ENCODE measurements at regions of chr21 and their contacts with region 1.

Region 1: GRCh38 chr21:36319765-36320420 is at the start of gene MORC3:
- DNase-seq: peak; percentile 98
- ATAC-seq: peak; percentile 94
- H3K4me3 Mint-ChIP-seq: peak within 1 kb of the TSS; percentile 88
- H3K27ac Mint-ChIP-seq: peak within 1 kb of the TSS; percentile 93
- H3K4me1 Mint-ChIP-seq: peaks cover 32% of the 10 kb centered on the region
- H3K27me3 Mint-ChIP-seq: no peaks in the 10 kb centered on the region
- total RNA-seq, gene MORC3: 25.6 to 30.5 TPM

Region 2: GRCh38 chr21:36156339-36156814 is 163.5 kb before region 1 on chr21:
- CTCF ChIA-PET with region 1: interaction called, 17 read pairs
- DNase-seq: peak; percentile 100
- ATAC-seq: peak; percentile 90
- H3K4me3 Mint-ChIP-seq: peak overlapping the region; percentile 78
- H3K27ac Mint-ChIP-seq: no peak overlapping the region
- H3K4me1 Mint-ChIP-seq: peaks cover 25% of the 10 kb centered on the region
- H3K27me3 Mint-ChIP-seq: no peaks in the 10 kb centered on the region

Region 3: GRCh38 chr21:36260030-36260787 is 59.7 kb before region 1 on chr21:
- CTCF ChIA-PET with region 1: interaction called, 20 read pairs
- DNase-seq: peak; percentile 66
- ATAC-seq: peak; percentile 92
- H3K4me3 Mint-ChIP-seq: peak overlapping the region; percentile 72
- H3K27ac Mint-ChIP-seq: peak overlapping the region; percentile 81
- H3K4me1 Mint-ChIP-seq: peaks cover 21% of the 10 kb centered on the region
- H3K27me3 Mint-ChIP-seq: no peaks in the 10 kb centered on the region

Region 4: DNA sequence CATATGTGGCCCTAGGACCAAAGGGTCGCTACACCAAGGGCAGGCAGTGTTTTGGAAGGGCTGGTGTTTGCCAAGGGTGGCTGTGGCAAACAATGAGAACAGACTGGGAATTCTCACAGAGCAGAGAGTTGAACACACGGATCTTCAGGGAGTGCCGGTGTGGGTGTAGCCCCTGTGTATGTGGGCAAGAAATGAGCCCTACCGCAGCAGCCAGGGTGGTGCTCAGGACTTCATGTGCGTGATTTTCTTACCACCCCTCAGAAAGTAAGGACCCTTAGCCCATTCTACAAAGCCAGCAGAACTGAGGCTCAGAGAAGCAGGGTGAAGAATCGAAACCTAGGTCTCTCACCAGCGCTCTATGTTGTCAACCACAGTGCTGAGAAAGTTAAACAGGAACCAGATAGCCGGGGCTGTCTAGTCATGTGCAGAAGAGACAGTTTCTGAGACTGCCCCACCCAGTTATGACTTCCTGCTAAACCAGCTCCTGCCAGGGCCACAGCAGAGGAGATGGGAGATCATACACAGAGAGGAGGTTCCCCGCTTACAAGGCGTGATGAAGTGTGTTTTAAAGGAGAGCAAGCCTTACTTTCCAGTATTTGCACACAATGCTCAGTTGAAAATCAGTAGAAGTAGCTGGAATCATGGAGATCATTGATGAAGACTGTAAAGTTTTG is 21.8 kb before region 1 on chr21:
- CTCF ChIA-PET with region 1: interaction called, 40 read pairs
- DNase-seq: peak; percentile 90
- ATAC-seq: peak; percentile 100
- H3K4me3 Mint-ChIP-seq: peak overlapping the region; percentile 75
- H3K27ac Mint-ChIP-seq: peak overlapping the region; percentile 96
- H3K4me1 Mint-ChIP-seq: peaks cover 37% of the 10 kb centered on the region
- H3K27me3 Mint-ChIP-seq: no peaks in the 10 kb centered on the region

Region 5: DNA sequence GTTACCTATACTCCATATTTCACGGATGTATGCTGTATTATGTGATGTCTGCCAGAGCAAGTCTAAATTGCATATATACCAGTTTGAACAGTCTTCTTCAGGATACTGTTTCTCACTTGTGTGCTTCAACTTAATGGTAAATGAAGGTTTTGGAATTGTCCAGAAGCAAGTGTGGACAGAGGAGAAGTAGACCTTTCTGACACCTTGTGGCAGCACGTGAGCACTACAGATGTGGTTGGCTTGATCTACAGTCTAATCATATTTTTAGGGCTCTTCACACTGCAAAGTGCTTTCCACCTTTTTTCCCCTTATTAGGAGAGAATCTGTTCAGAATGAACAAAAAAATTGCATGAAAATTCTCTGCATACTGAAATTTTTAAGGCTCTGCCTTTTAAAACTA is 11.0 kb after region 1 on chr21:
- CTCF ChIA-PET with region 1: interaction called, 14 read pairs
- DNase-seq: peak; percentile 65
- ATAC-seq: peak; percentile 89
- H3K4me3 Mint-ChIP-seq: no peak overlapping the region
- H3K27ac Mint-ChIP-seq: peak overlapping the region; percentile 34
- H3K4me1 Mint-ChIP-seq: peaks cover 28% of the 10 kb centered on the region
- H3K27me3 Mint-ChIP-seq: no peaks in the 10 kb centered on the region

Measured in activated CD8-positive, alpha-beta memory T cell treated with anti-CD3 and anti-CD28 coated beads, Interleukin-2, amount 10 ng/mL, durations not matched to agents 7 days and 5 days (primary cell).